ENCODE measurements at regions of chr6 and their contacts with region 1.

Region 1: DNA sequence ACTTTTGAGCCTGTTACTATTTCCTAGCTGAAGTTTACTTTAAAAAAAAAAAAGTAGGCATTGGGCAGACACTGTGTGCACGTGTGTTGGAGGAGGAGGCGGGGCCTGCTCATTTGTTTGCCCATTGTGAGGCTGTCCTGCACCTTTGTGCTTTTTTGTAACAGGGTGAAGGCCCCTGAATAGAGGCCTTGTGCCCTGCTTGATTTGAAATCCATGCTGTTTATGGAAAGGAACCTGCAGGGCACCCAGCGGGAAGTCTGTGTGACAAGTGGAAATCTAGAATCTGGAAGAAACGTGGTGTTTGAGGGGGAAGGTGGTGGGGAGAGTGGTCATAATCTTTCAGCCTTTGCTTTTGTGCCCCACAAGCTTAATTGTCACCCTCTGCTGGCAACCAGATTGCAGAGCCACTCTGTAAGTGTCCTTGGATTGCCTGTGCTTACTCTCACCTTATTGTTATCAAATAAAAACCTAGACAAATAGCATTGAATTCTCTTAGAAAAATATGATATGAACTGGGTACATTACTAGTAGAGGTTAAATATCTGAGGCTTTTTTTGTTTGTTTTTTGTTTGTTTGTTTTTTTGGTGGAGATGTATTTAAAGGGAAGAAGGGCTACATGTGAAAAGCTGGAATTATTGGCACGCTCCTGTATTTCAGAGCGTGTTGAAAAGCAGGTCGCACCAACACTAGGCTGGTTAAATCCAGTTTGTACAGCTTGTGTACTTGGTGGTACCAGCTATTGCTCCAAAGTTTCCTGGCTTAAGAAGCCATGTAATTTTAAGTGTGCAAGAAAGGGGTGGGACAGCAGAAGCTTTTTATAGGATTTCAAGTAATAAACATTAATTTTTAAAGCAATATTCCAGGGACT is 156.3 kb downstream of the ARID1B start:
- DNase-seq: no peak
- H3K4me3 ChIP-seq: peak overlapping the region in 1 of 4 experiments; percentile 15; a peak in 2 of 8 replicates
- H3K27ac ChIP-seq: no peak overlapping the region
- H3K4me1 ChIP-seq: peaks cover 4 to 15% (median 8%) of the 10 kb centered on the region in 4 experiments; a peak in 5 of 7 replicates
- H3K27me3 ChIP-seq: no peaks in the 10 kb centered on the region
- CTCF ChIP-seq: peak in 2 of 3 experiments; percentile 16 to 21; a peak in 2 of 4 replicates
- EP300 ChIP-seq: no peak
- POLR2A ChIP-seq: no peak
- RAD21 ChIP-seq: peak; percentile 33 to 37; a peak in 3 of 4 replicates

Region 2: DNA sequence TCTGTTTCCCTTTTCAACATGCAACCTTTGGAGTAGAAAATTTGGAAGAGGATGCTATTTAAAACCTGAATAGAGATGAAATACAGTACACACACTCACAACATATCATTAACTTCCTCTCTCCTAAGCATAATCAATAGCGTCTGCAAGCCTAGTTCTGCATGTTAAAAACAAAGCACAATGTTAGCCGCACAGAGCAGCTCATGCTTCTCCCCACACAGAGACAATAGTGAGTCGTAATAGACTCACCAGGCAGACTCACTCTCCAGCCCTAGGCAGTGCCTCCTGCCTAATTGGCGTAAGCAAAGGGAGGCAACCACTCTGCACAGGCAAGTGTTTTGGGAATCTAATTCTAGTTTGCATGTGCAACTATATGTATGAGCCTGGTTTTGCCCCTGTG is 202.0 kb before region 1 on chr6:
- CTCF ChIA-PET with region 1: no interaction called
- POLR2A ChIA-PET with region 1: no interaction called
- DNase-seq: no peak
- H3K4me3 ChIP-seq: no peak overlapping the region
- H3K27ac ChIP-seq: no peak overlapping the region
- H3K4me1 ChIP-seq: peaks cover 0 to 3% (median 0%) of the 10 kb centered on the region in 4 experiments; a peak in 1 of 7 replicates
- H3K27me3 ChIP-seq: no peaks in the 10 kb centered on the region
- CTCF ChIP-seq: no peak
- EP300 ChIP-seq: no peak
- POLR2A ChIP-seq: no peak
- RAD21 ChIP-seq: no peak

Region 3: GRCh38 chr6:156876302-156876701 is 57.1 kb before region 1 on chr6:
- CTCF ChIA-PET with region 1: interaction called, 15 read pairs
- POLR2A ChIA-PET with region 1: no interaction called
- DNase-seq: peak in 1 of 2 experiments; percentile 81
- H3K4me3 ChIP-seq: no peak overlapping the region
- H3K27ac ChIP-seq: no peak overlapping the region
- H3K4me1 ChIP-seq: peaks cover 2 to 8% (median 5%) of the 10 kb centered on the region in 4 experiments; a peak in 5 of 7 replicates
- H3K27me3 ChIP-seq: no peaks in the 10 kb centered on the region
- CTCF ChIP-seq: peak; percentile 76 to 84 (median 77)
- EP300 ChIP-seq: no peak
- POLR2A ChIP-seq: no peak
- RAD21 ChIP-seq: peak; percentile 69 to 80

Region 4: DNA sequence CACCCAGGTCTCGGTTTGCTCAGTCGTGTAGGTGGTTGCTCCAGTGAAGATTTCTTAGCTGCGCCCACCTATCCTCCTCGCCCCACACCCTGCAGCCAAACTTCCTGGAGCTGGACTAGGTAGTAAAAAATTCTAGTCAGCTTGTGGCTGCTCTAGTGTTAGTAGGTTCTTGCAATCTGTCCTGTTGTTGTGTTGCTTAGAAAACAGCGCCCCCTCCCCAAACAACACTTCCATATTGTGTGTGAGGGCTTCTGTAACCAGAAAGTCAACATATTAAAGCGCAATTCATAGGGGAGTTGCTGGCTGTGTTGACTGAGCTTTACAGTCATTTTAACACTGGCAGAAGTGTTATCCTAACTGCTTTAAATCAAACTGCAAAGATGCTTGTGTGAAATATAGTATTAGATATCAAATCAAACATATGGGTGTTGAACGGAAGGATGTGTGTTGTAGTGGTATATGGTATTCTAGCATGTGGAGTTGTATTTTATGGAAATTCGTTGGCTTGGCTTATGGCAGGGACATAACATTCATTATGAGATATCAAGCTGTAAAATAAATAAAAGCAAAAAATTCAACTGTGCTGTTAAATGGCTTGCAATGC is 33.8 kb before region 1 on chr6:
- CTCF ChIA-PET with region 1: interaction called, 11 read pairs
- POLR2A ChIA-PET with region 1: no interaction called
- DNase-seq: no peak
- H3K4me3 ChIP-seq: no peak overlapping the region
- H3K27ac ChIP-seq: no peak overlapping the region
- H3K4me1 ChIP-seq: peaks cover 0 to 7% (median 2%) of the 10 kb centered on the region in 4 experiments; a peak in 1 of 7 replicates
- H3K27me3 ChIP-seq: no peaks in the 10 kb centered on the region
- CTCF ChIP-seq: peak in 2 of 3 experiments; percentile 22 to 25; a peak in 2 of 4 replicates
- EP300 ChIP-seq: no peak
- POLR2A ChIP-seq: no peak
- RAD21 ChIP-seq: peak in 1 of 2 experiments; percentile 34; a peak in 3 of 4 replicates

Region 5: GRCh38 chr6:156953479-156954146 is 20.2 kb after region 1 on chr6:
- CTCF ChIA-PET with region 1: interaction called, 16 read pairs
- POLR2A ChIA-PET with region 1: no interaction called
- DNase-seq: no peak
- H3K4me3 ChIP-seq: peak overlapping the region in 1 of 4 experiments; percentile 9; a peak in 1 of 8 replicates
- H3K27ac ChIP-seq: no peak overlapping the region
- H3K4me1 ChIP-seq: peaks cover 0 to 14% (median 12%) of the 10 kb centered on the region in 4 experiments; a peak in 5 of 7 replicates
- H3K27me3 ChIP-seq: no peaks in the 10 kb centered on the region
- CTCF ChIP-seq: peak in 1 of 3 experiments; percentile 7; a peak in 1 of 4 replicates
- EP300 ChIP-seq: no peak
- POLR2A ChIP-seq: no peak
- RAD21 ChIP-seq: no peak